ENCODE measurements at regions of chr21 and their contacts with region 1.

Region 1: DNA sequence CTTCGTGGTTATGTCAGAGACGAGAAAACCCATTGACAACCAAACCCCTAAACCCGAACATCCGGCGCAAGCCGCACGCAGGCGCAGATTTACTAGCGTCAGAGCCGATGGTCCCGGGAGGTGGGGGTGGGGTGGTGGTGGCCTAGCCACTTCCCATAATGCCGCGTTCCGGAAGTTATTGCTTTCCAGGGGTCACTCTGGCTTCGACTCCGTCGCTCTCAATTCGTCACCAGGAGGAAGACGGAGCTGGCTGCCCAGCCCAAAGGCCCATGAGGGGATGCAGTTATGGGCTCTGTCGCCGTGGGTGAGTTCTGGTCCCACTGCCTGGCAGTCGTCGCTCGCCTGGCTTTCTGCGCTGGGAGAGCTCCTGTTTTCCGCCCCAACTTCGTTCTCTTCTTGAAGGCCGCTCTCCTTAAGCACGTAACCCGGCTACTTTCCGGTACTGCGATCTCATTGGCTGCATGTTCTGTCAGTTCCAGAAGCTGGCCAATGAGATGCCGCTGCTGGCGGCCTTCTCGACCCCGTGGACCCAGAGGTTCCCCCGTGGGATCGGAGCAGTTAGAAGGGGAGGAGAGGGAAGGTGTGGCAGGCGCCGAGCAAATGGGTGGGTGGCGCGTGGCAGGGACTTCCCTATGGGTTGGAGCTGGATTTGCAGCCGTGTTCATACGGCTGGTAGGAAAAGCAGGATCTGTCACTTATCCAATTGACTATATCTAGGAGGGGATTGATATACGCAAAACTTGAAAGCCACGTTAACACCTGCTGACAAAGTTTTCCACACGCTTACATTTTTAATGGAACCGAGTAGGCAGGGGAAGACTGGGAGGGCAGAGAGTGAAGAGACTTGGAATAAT is at the start of gene USP16:
- DNase-seq: peak; percentile 97 to 98
- H3K4me3 ChIP-seq: peak within 1 kb of the TSS; percentile 86
- H3K4me3 Mint-ChIP-seq: peak within 1 kb of the TSS; percentile 94
- H3K27ac Mint-ChIP-seq: peak within 1 kb of the TSS; percentile 100
- H3K4me1 ChIP-seq: peaks cover 9% of the 10 kb centered on the region
- H3K4me1 Mint-ChIP-seq: peaks cover 20% of the 10 kb centered on the region
- H3K27me3 ChIP-seq: no peaks in the 10 kb centered on the region
- H3K27me3 Mint-ChIP-seq: no peaks in the 10 kb centered on the region
- CTCF ChIP-seq: no peak
- total RNA-seq, gene USP16: 24.2 and 27.0 TPM in 2 replicates

Region 2: GRCh38 chr21:28959367-28960099 is 65.2 kb before region 1 on chr21:
- CTCF ChIA-PET with region 1: no interaction called
- POLR2A ChIA-PET with region 1: interaction called, 10 read pairs
- intact Hi-C with region 1: no loop called
- DNase-seq: no peak
- H3K4me3 ChIP-seq: no peak overlapping the region
- H3K4me3 Mint-ChIP-seq: no peak overlapping the region
- H3K27ac Mint-ChIP-seq: no peak overlapping the region
- H3K4me1 ChIP-seq: no peaks in the 10 kb centered on the region
- H3K4me1 Mint-ChIP-seq: no peaks in the 10 kb centered on the region
- H3K27me3 ChIP-seq: no peaks in the 10 kb centered on the region
- H3K27me3 Mint-ChIP-seq: no peaks in the 10 kb centered on the region
- CTCF ChIP-seq: no peak

Region 3: DNA sequence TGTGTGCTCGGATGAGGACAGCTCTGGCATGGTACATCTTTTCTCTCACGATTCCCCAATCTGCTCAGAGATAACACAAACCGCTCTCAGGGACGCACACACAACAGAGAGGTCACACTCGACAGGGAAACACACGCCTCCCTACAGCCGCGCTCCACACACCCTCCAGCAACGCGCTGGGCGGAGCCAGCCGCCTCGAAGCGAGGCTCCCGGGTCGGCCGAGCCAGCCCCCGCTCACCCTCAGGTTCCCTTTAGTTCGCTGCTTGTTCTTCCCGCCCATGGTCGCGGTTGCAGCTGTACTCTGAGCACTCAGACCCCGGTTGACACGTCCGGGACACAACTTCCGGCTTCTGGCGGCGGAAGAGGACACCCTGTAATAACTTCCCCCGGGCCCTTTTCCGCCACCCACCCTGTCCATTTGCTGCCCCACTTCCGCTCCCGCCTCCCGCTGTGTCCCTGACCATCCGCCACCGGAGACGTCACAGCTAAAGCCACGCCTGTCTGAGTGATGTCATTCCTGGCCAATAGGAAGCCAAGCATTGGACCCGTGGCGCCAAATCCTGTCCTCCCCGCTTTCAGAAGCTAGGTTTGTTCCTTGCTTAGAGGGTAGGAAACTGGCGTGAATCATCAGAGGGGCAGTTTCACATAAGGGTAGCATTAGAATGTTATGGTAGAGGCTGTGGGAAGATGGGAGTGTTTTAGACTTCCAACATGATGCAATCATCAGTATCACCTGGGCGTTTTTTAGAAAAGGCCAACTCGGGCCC is 32.0 kb before region 1 on chr21 and contains the start of gene LTN1:
- CTCF ChIA-PET with region 1: interaction called, 3 read pairs
- POLR2A ChIA-PET with region 1: interaction called, 8 read pairs
- intact Hi-C with region 1: loop called (anchors 1 kb)
- DNase-seq: peak; percentile 98 to 99
- H3K4me3 ChIP-seq: peak within 1 kb of the TSS; percentile 90
- H3K4me3 Mint-ChIP-seq: peak within 1 kb of the TSS; percentile 82
- H3K27ac Mint-ChIP-seq: peak within 1 kb of the TSS; percentile 86
- H3K4me1 ChIP-seq: no peaks in the 10 kb centered on the region
- H3K4me1 Mint-ChIP-seq: no peaks in the 10 kb centered on the region
- H3K27me3 ChIP-seq: no peaks in the 10 kb centered on the region
- H3K27me3 Mint-ChIP-seq: no peaks in the 10 kb centered on the region
- CTCF ChIP-seq: no peak
- total RNA-seq, gene LTN1: 25.4 TPM in 2 replicates

Region 4: GRCh38 chr21:29002442-29003144 is 22.1 kb before region 1 on chr21:
- CTCF ChIA-PET with region 1: interaction called, 5 read pairs
- POLR2A ChIA-PET with region 1: interaction called, 47 read pairs
- intact Hi-C with region 1: loop called (anchors 1 kb)
- DNase-seq: peak; percentile 93 to 96
- H3K4me3 ChIP-seq: peak overlapping the region; percentile 52
- H3K4me3 Mint-ChIP-seq: peak overlapping the region; percentile 88
- H3K27ac Mint-ChIP-seq: peak overlapping the region; percentile 91
- H3K4me1 ChIP-seq: no peaks in the 10 kb centered on the region
- H3K4me1 Mint-ChIP-seq: no peaks in the 10 kb centered on the region
- H3K27me3 ChIP-seq: no peaks in the 10 kb centered on the region
- H3K27me3 Mint-ChIP-seq: no peaks in the 10 kb centered on the region
- CTCF ChIP-seq: no peak

Region 5: DNA sequence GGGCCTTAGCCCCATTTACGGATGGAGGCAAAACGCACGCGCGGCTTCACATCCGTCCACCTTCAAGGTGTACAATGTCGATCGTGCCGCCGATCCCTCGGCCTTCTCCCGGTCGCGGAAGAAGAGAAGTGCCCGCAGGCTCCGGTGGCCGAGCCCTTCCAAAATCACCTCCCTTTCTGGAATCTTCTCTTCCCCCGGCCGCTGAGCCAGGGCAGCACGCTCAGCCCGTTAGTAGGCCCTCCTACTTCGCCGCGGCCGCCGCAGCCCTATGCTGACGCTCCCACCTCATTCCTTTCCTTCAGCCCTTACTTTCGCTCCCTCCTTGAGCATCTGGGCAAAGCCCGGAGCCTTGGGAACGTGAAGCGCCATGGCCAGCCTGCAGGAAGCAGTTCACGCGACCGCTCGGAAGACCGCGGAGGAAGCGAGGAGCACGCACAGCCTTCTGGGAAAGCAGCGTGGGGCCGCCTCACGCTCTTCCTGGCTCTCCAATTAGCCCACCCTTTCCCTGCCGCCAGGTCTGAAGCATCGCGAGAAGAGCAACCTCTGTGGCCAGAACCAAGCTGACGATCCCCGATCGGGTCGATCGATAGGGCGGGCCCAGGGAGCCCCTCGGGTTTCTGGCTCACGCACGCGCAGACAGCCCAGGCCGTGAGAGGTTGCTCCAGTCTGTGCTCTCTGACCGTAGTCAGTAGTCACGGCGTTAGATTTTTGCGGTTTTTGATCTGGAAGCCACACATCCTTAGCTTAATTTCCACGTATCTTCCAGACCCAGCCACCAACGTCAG is 48.7 kb after region 1 on chr21 and contains the start of gene CCT8:
- CTCF ChIA-PET with region 1: no interaction called
- POLR2A ChIA-PET with region 1: interaction called, 8 read pairs
- intact Hi-C with region 1: loop called (anchors 1 kb)
- DNase-seq: peak; percentile 98 to 99
- H3K4me3 ChIP-seq: peak within 1 kb of the TSS; percentile 90
- H3K4me3 Mint-ChIP-seq: peak within 1 kb of the TSS; percentile 99
- H3K27ac Mint-ChIP-seq: peak within 1 kb of the TSS; percentile 98
- H3K4me1 ChIP-seq: peaks cover 5% of the 10 kb centered on the region; the same call in 1 of the 2 replicates
- H3K4me1 Mint-ChIP-seq: peaks cover 17% of the 10 kb centered on the region
- H3K27me3 ChIP-seq: no peaks in the 10 kb centered on the region
- H3K27me3 Mint-ChIP-seq: no peaks in the 10 kb centered on the region
- CTCF ChIP-seq: no peak
- total RNA-seq, gene CCT8: 269 and 302 TPM in 2 replicates